AG04449 (cell line): ENCODE measurements at regions of chr20 and their contacts with region 1.

Region 1: DNA sequence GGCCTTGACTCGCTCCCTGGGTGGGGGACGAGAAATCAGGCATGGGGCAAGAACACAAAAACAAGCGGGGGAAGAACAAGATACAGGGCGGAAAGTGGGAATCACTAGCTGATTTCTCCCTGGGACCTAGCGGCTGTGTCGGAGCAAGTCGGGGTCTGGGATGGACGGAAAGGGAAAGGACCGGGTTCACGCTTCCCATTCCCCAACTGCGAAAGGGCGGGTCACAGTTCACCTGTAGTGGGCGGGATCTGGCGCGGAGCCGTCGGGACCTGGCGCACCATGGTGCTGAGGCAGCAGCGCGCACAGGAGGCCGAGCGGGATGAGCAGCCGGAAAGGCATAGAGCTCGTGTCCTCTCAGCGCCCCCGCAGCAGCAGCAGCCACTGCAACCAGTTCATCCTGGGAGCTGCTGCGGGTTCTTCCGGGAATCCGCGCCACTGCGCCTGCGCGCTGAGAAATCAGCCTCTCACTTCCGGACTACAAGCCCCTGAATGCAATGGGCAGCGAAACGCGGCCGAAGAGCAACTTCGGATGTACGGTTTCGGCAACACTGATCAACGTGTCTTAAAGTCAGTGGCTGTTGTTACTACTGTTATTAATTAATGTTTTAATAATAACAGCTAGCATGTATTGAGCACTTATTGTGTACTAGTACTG is at the start of gene EDEM2:
- DNase-seq: peak; percentile 75
- H3K4me3 ChIP-seq: peak within 1 kb of the TSS; percentile 95
- CTCF ChIP-seq: peak; percentile 8

Region 2: DNA sequence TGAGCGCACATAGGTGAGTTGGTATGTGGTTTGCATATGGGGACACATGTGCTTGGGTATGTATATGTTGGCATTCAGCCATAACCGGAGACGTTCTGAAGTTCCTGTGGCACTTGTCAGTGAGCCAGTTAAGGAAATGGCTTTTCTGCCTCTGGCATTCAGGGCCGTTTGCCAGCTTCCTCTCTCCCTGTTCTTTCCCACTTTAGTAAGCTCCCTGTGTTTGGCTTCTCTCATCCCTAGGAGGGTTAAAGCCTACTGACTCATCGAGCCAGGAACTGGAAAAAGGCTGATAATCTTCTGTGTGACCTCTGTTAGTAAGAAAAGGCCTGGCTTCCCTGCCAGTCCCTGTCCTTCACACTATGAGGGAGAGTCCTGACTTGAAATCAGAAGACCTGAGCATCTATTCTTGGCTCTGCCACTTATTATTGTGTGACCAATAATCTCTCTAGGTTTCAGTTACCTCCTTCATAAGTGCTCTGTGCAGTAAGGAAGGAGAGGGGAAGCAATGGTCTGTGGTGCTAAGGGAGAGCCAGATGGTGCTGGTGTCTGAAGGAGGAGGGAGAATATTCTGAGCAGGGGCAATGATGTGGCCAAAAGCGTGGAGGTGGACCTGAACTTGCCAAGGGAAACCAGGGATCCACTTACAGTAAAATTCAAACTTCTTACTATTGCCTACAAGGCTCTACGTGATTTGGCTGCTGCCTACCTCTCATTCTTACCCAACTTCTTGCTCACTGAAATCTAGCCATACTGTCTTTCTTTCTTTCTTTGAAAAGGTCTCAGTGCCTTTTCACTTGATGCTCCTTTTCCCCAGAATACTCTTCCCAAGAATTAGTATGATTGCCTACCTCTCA is 239.2 kb before region 1 on chr20:
- CTCF ChIA-PET with region 1: no interaction called
- POLR2A ChIA-PET with region 1: no interaction called
- DNase-seq: peak; percentile 60
- H3K4me3 ChIP-seq: no peak overlapping the region
- CTCF ChIP-seq: no peak

Region 3: GRCh38 chr20:35135867-35136586 is 11.0 kb before region 1 on chr20:
- CTCF ChIA-PET with region 1: interaction called, 26 read pairs
- POLR2A ChIA-PET with region 1: no interaction called
- DNase-seq: no peak
- H3K4me3 ChIP-seq: no peak overlapping the region
- CTCF ChIP-seq: no peak

Region 4: DNA sequence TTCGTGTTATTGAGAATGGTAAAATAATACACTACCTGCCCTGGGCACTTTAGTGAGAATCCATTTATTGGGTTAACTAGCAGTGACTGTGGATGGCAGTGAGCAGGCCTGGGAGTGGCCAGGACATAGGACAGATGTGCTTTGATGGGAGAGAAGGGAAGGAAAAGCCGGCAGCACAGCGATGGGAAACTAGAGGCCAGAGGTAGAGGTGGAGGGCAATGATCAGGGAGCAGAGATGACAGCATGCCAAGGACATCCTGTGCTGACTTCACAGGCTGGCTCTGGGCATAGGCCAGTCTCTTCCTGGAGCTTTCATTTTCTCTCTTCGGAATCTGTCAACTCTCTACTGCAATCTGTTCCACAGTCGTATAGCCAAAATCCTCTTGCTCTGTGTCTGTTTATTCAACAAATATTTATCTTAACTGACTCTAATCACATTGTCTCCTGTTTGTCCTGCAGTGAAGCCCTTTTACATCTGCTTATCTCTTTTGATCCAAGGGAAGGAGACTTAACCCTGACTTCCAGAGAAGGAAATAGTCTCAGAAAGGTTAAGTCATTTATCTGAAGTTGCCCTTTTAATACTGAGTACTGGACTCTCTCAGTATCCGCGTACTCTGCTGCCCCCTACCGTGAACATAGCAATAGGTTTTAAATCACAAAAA is 61.0 kb after region 1 on chr20:
- CTCF ChIA-PET with region 1: interaction called, 129 read pairs
- POLR2A ChIA-PET with region 1: no interaction called
- DNase-seq: peak; percentile 10
- H3K4me3 ChIP-seq: no peak overlapping the region; the same call in 1 of the 2 replicates
- CTCF ChIP-seq: peak; percentile 60

Region 5: DNA sequence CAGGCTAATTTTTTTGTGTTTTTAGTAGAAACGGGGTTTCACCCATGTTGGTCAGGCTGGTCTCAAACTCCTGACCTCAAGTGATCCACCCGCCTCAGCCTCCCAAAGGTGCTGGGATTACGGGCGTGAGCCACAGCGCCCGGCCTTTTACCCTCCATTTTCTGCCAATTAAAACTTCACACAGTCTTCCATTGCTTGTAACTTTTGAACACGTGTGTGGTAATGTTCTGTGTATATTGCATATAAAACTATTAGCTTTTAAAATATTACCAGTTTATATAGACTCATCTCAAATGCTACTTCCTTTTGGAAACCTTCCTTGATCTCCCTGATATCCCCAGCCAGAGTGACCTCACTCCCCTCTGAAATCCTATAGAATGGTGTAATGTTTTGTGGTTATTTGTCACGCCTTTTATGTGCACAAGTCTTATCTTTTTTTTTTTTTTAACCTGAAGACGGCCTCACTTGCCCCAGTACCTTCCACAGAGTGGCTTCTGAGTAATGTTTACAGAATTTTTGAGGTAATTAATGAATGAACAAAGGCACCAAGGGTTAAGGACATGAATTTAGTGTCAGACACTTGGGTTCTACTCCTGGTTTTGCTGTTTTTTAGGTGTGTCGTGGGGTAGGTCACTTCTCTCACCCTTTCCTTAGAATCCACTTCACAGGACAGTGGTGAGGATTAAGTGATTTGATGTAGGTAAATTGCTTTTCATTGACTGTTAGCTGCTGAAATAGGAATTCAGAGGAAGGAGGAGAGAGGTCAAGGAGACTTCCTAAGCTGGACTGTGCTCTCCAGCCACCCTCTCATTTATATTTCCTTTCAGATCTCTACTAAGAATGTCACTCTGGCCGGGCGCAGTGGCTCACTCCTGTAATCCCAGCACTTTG is 68.3 kb after region 1 on chr20:
- CTCF ChIA-PET with region 1: interaction called, 129 read pairs
- POLR2A ChIA-PET with region 1: no interaction called
- DNase-seq: peak; percentile 29
- H3K4me3 ChIP-seq: no peak overlapping the region
- CTCF ChIP-seq: no peak

Region 6: DNA sequence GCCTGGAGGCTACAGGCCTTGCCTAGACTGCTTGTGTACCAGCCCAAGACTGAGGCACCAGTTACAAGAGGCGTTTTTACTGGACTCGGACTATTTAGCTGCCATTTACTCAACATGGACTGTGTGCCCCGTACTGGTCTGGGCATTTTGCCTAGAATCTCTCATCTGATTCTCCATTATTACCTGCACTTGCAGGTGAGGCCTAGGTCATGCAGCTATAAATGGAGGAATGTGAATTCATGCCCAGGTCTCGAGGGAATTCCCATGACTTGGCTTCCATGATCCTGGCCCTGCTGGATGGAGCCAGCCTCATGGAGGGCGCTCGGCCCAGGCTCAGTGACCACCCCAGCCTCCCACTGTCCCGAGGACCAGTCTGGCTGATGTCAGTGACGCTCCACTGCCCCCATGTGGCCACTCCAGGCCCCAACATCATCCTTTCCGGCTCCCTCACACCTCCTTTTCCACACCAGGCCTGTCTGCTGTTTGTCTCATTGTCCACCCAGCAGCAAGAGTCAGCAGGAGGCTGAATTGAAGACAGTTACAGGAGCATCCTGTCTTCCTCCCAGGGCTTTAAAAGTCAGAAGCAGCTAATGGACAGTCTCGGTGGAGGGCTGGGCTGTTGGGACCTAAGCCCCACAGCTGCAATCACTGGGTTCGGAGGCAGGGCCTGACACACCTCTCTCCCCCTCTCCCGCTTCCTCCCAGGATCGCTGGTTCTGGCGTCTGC is 122.2 kb after region 1 on chr20:
- CTCF ChIA-PET with region 1: interaction called, 271 read pairs
- POLR2A ChIA-PET with region 1: no interaction called
- DNase-seq: no peak
- H3K4me3 ChIP-seq: no peak overlapping the region
- CTCF ChIP-seq: peak; percentile 95

Region 7: DNA sequence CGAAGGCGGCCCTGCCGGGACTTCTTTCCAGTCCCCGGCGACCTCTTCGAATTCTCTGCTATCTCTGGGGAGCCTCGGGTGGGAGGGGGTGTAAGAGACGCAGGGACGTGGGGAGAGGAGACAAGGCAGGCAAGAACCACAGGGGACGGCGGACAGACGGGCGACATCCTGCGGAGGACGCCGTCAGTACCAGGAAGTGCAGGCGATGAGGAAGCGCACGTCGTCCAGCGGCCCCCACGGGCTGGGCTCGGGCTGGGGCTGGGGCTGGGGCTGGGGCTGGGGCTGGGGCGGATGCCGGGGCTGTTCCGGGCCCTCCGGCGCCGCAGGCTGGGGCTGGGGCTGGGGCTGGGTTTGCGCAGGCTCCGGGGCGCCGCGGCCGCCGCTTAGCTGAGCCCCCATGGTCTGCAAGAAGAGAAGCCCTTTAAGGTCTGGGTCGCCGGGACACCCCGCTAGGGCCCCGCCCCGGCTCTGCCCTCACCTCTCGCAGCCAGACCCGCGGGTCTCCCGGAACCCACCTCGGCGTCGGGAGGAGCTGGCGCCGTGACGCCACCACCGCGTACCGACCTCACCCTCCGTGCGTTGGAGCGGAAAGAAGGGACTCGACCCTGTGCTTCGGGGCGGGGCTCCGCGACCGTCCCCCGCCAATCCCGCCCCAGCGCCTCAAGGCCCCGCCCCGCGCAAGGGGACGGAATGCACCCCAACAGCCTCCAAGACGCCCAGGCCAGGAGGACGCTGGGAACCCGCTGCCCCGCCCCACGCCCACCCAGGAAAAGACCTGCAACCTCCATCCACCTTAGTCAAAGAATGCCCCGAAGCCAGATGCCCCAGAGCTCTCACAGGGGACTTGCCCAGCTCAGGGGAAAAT is 130.7 kb after region 1 on chr20 and contains the start of gene MMP24OS:
- CTCF ChIA-PET with region 1: interaction called, 271 read pairs
- POLR2A ChIA-PET with region 1: interaction called, 5 read pairs
- DNase-seq: no peak
- H3K4me3 ChIP-seq: peak within 1 kb of the TSS; percentile 83
- CTCF ChIP-seq: peak; percentile 48

Region 8: DNA sequence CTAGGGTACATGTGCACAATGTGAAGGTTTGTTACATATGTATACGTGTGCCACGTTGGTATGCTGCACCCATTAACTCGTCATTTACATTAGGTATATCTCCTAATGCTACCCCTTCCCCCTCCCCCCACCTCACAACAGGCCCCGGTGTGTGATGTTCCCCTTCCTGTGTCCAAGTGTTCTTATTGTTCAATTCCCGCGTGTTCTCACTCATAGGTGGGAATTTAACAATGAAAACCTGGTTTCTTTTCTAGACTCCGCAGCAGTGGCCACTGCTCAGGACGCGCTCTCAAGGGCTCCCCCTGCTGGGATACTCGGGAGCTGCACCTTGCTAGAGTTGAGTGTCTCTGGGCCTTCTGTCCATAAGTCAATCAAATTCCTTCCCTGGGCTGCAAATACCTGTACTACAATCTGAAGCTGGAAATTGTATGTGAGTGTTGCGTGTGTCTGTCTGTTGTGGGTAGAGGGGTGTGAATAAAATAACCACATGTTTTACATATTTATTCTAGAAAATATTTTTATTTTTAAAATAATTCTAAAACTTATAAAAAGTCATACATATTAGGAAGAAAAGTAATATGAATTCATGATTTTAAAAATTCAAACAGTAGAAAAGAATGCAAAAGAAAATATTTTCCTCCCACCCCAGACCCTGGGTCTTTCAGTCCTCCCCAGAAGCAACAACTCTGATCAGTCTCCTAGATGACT is 300.2 kb after region 1 on chr20:
- CTCF ChIA-PET with region 1: interaction called, 10 read pairs
- POLR2A ChIA-PET with region 1: no interaction called
- DNase-seq: no peak
- H3K4me3 ChIP-seq: peak overlapping the region; percentile 23; the same call in 1 of the 2 replicates
- CTCF ChIP-seq: peak; percentile 91